GM12878 (cell line): ENCODE measurements at regions of chr2 and their contacts with region 1.

Region 1: DNA sequence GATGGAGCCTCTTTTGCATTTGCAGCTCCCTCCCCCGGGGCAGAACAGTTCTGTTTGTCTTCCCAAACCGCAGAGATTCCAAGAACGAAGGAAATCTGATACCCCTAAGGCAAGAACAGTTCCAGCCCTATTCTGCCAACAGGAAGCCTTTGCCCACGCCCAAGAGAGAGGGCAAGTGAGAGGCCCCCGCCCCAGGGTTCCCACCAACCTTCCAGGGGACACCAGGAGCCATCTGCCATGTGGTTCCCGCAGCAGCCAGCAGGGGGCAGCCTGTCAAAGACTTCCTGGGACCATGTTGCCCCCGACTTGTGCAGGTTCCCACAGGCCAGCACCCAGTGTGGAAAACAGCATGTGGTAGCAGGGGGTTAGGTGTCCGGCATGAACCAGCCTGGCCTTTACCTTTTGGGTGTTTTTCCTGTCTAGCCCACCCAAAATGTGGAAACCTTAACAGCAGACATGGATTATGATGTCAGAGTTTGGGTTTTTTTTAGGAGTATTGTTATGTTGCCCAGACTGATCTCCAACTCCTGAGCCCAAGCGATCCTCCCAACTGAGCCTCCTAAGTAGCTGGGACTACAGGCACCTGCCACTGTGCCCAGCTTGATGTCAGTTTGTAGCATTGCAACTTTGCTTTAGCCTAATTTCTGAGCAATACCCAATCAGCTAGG is 21.7 kb upstream of the EFHD1 start:
- DNase-seq: no peak
- ATAC-seq: peak; percentile 90
- H3K4me3 ChIP-seq: no peak overlapping the region
- H3K27ac ChIP-seq: no peak overlapping the region
- H3K4me1 ChIP-seq: no peaks in the 10 kb centered on the region
- H3K27me3 ChIP-seq: no peaks in the 10 kb centered on the region
- CTCF ChIP-seq: peak; percentile 69 to 94 (median 92)
- EP300 ChIP-seq: no peak
- POLR2A ChIP-seq: no peak
- RAD21 ChIP-seq: peak; percentile 49

Region 2: GRCh38 chr2:233259730-233260129 is 648.0 kb after region 1 on chr2:
- CTCF ChIA-PET with region 1: interaction called, 5 read pairs
- POLR2A ChIA-PET with region 1: no interaction called
- RAD21 ChIA-PET with region 1: no interaction called
- SMC1A ChIA-PET with region 1: no interaction called
- in situ Hi-C with region 1: loop called (anchors 5 kb)
- intact Hi-C with region 1: loop called (anchors 5 kb)
- DNase-seq: no peak
- ATAC-seq: no peak
- H3K4me3 ChIP-seq: no peak overlapping the region
- H3K27ac ChIP-seq: no peak overlapping the region
- H3K4me1 ChIP-seq: peaks cover 32% of the 10 kb centered on the region
- H3K27me3 ChIP-seq: no peaks in the 10 kb centered on the region
- CTCF ChIP-seq: no peak
- EP300 ChIP-seq: no peak
- POLR2A ChIP-seq: no peak
- RAD21 ChIP-seq: no peak